HEK293 (cell line): ENCODE measurements at regions of chr5 and their contacts with region 1.

Region 1: GRCh38 chr5:172707285-172708182 is 63.5 kb downstream of the DUSP1 start:
- H3K4me3 ChIP-seq: no peak overlapping the region
- H3K27ac ChIP-seq: no peak overlapping the region
- H3K4me1 ChIP-seq: no peaks in the 10 kb centered on the region; the same call in 1 of the 2 replicates
- CTCF ChIP-seq: peak; percentile 70; the same call in 1 of the 2 replicates

Region 2: DNA sequence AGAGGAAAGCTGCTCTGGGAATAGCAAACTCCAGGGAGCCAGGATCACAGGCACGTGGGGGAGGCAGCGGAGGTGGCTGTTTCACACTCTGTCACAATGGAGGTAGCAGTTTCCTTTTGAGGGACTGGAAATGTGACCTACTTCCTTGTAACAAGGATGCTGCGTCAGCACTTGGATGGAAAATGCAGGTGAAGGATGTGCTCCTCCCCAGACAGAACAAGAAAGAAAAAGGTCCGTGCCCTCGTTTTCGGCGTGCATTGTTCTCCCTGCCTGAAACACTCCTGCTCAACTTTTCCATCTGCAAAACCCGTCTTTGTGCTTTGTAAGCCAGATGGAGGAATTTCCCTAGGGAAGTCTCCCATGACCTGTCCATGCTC is 198.1 kb before region 1 on chr5:
- CTCF ChIA-PET with region 1: no interaction called
- POLR2A ChIA-PET with region 1: no interaction called
- H3K4me3 ChIP-seq: no peak overlapping the region
- H3K27ac ChIP-seq: no peak overlapping the region
- H3K4me1 ChIP-seq: no peaks in the 10 kb centered on the region
- CTCF ChIP-seq: no peak

Region 3: GRCh38 chr5:172574871-172575223 is 132.7 kb before region 1 on chr5:
- CTCF ChIA-PET with region 1: no interaction called
- POLR2A ChIA-PET with region 1: no interaction called
- H3K4me3 ChIP-seq: no peak overlapping the region
- H3K27ac ChIP-seq: no peak overlapping the region
- H3K4me1 ChIP-seq: no peaks in the 10 kb centered on the region
- CTCF ChIP-seq: no peak

Region 4: DNA sequence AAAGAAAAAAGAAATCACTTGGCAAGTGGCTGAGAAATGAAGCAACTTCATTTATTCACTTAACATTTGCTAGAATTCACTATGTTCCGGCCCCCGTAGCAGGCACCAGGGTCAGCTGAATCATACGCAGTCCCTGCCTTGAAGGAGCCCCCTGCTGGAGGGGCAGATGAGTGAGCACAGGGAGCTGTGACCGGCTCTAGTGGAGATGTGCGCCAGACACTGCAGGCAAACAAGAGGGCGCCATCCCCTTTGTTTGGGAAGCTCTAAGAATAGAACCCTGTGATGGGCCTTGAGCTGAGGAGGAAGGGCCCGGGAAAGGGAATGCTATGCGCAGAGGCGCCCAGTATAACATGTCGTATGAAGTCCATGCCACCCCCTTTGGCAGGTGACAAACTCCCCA is 231.5 kb after region 1 on chr5:
- CTCF ChIA-PET with region 1: interaction called, 214 read pairs
- POLR2A ChIA-PET with region 1: interaction called, 4 read pairs
- H3K4me3 ChIP-seq: no peak overlapping the region
- H3K27ac ChIP-seq: no peak overlapping the region
- H3K4me1 ChIP-seq: no peaks in the 10 kb centered on the region
- CTCF ChIP-seq: peak; percentile 9; the same call in 1 of the 2 replicates